CD8-positive, alpha-beta T cell (primary cell): ENCODE measurements at regions of chr19 and their contacts with region 1.

Region 1: DNA sequence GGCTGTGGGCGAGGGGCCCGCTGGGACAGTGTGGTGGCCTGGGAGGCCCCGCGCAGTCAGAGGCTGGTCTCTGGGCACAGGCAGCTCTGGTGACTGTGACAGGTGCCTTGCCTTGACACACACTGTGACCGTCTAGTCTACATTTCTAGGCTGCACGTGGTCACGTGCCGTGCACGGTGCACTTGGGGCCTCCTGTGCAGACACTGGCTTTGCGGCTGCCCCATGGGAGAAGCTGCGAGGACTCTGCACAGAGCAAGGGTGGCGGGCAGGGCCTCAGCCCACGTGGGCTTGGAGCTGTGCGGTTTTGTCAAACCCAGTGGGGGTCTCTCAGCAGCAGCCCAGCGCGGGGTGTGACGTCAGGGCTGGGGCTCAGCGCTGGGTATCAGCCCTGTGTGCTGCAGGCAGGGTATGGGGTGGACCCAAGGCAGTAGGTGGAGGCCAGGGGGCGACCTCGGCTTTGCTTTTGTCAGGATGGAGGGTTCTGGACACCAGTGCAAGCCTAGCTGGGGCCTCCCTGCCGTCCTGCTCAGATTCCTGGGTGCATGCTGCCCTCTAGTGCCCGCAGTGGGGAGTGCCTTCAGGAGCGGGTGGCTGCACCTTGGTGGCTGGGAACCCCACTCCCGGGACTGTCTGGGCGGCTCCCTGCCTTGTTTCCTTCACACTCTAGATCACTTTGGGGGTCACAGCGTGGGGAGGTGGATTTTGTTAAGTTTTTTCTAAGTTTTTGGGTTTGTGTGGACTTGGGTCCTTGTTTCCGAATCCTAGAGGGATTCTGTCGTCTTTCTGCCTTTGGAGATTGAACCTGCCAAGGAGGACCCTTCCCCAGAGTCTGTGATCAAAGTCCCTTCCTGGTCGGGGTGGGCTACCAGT is 62.6 kb downstream of the KDM4B start:
- DNase-seq: peak; percentile 70 to 92 (median 81)
- ATAC-seq: peak; percentile 87
- H3K4me3 ChIP-seq: no peak overlapping the region
- H3K4me3 Mint-ChIP-seq: no peak overlapping the region
- H3K27ac ChIP-seq: no peak overlapping the region
- H3K27ac Mint-ChIP-seq: no peak overlapping the region
- H3K4me1 ChIP-seq: peaks cover 7% of the 10 kb centered on the region
- H3K4me1 Mint-ChIP-seq: peaks cover 8% of the 10 kb centered on the region
- H3K27me3 ChIP-seq: no peaks in the 10 kb centered on the region
- H3K27me3 Mint-ChIP-seq: no peaks in the 10 kb centered on the region
- CTCF ChIP-seq: peak; percentile 88

Region 2: DNA sequence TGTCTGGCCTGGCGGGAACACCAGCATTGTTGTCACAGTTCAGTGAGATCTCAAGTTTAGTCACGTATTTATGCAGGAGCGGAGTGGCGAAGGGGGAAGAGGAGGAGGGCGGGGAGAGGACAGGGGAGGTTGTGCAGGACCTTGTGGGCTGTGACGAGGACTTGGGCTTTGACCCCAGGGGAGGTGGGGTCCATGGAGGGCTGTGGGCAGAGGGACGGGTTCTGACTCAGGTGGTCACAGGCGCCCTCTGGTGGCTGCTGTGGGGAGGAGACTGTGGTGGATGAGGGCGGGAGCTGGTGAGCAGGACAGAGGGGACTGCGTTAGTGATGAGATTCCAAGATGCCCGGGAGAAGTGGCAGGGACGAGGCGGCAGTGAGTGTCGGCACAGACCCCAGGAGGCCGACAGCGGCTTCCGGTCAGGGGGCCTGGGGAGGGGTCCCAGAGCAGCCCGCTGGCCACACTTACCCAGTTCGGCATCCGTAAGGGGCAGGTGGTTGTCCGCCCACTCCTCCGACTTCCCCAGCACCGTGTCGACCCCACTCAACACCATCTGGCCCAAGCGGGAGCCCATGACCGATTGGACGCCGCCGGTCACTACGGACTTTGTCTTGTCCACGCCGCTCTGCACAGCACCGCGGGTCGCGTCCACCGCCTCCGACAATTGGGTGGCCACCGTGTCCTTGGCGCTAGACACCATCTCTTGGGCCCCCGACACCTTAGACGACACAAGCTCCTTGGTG is 179.7 kb before region 1 on chr19:
- CTCF ChIA-PET with region 1: interaction called, 25 read pairs
- POLR2A ChIA-PET with region 1: no interaction called
- intact Hi-C with region 1: loop called in 1 of 2 experiments (anchors 5 kb)
- DNase-seq: peak; percentile 58 to 88 (median 75)
- ATAC-seq: peak; percentile 91
- H3K4me3 ChIP-seq: no peak overlapping the region
- H3K4me3 Mint-ChIP-seq: no peak overlapping the region
- H3K27ac ChIP-seq: no peak overlapping the region
- H3K27ac Mint-ChIP-seq: no peak overlapping the region
- H3K4me1 ChIP-seq: no peaks in the 10 kb centered on the region
- H3K4me1 Mint-ChIP-seq: no peaks in the 10 kb centered on the region
- H3K27me3 ChIP-seq: no peaks in the 10 kb centered on the region
- H3K27me3 Mint-ChIP-seq: no peaks in the 10 kb centered on the region
- CTCF ChIP-seq: peak; percentile 73

Region 3: GRCh38 chr19:4909897-4910593 is 121.4 kb before region 1 on chr19:
- CTCF ChIA-PET with region 1: interaction called, 14 read pairs
- POLR2A ChIA-PET with region 1: no interaction called
- intact Hi-C with region 1: loop called in 1 of 2 experiments (anchors 1 kb)
- DNase-seq: peak; percentile 85 to 96 (median 93)
- ATAC-seq: peak; percentile 82
- H3K4me3 ChIP-seq: peak overlapping the region; percentile 44 to 62
- H3K4me3 Mint-ChIP-seq: peak overlapping the region; percentile 99
- H3K27ac ChIP-seq: no peak overlapping the region
- H3K27ac Mint-ChIP-seq: no peak overlapping the region
- H3K4me1 ChIP-seq: peaks cover 57% of the 10 kb centered on the region
- H3K4me1 Mint-ChIP-seq: peaks cover 66% of the 10 kb centered on the region
- H3K27me3 ChIP-seq: no peaks in the 10 kb centered on the region
- H3K27me3 Mint-ChIP-seq: no peaks in the 10 kb centered on the region
- CTCF ChIP-seq: no peak

Region 4: DNA sequence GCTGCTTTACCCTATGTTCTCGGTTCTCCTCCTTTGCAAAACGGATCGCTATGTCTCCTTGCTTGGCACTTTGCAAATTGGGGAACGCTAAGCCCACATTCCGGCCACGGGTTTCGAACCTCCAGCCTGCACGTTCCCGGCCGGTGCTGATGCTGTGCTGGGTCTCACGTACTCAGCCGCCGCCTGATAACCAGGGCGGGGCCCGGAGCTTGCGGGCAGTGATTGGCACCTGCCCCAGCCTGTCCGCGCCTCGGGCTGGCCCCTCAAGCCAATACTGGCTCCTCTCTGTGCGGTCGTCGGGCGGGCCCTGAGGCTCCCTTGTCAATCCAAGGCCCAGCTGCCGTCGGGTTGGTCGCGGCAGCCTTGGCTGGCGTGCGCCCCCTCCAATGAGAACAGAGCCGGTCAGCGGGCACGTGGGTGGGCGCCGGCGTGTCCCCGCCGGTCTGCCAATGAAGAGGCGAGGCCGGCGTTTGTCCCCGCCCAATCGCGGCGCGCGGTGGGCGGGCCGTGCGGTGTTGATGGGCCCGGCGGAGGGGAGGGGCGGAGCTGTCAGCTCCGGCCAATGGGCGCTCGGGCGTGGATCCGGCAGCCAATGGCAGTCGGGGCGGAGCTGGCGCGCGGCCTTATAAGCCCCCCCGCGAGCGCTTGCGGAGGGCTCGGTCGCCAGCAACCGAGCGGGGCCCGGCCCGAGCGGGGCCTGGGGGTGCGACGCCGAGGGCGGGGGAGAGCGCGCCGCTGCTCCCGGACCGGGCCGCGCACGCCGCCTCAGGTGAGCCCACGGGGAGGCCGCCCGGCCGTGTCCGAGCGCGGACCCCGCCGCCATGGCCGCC is 62.8 kb before region 1 on chr19 and contains the start of gene KDM4B:
- CTCF ChIA-PET with region 1: interaction called, 11 read pairs
- POLR2A ChIA-PET with region 1: no interaction called
- intact Hi-C with region 1: no loop called
- DNase-seq: peak; percentile 96 to 100 (median 99)
- ATAC-seq: peak; percentile 87
- H3K4me3 ChIP-seq: peak within 1 kb of the TSS; percentile 54 to 57
- H3K4me3 Mint-ChIP-seq: peak within 1 kb of the TSS; percentile 87
- H3K27ac ChIP-seq: peak within 1 kb of the TSS; percentile 33 to 60
- H3K27ac Mint-ChIP-seq: peak within 1 kb of the TSS; percentile 81
- H3K4me1 ChIP-seq: peaks cover 30% of the 10 kb centered on the region
- H3K4me1 Mint-ChIP-seq: peaks cover 30% of the 10 kb centered on the region
- H3K27me3 ChIP-seq: no peaks in the 10 kb centered on the region
- H3K27me3 Mint-ChIP-seq: no peaks in the 10 kb centered on the region
- CTCF ChIP-seq: no peak
- total RNA-seq, gene KDM4B: 111 to 121 TPM

Region 5: GRCh38 chr19:5271141-5271540 is 239.7 kb after region 1 on chr19:
- CTCF ChIA-PET with region 1: no interaction called
- POLR2A ChIA-PET with region 1: no interaction called
- intact Hi-C with region 1: no loop called
- DNase-seq: no peak
- ATAC-seq: no peak
- H3K4me3 ChIP-seq: no peak overlapping the region
- H3K4me3 Mint-ChIP-seq: no peak overlapping the region
- H3K27ac ChIP-seq: no peak overlapping the region
- H3K27ac Mint-ChIP-seq: no peak overlapping the region
- H3K4me1 ChIP-seq: no peaks in the 10 kb centered on the region
- H3K4me1 Mint-ChIP-seq: no peaks in the 10 kb centered on the region
- H3K27me3 ChIP-seq: no peaks in the 10 kb centered on the region
- H3K27me3 Mint-ChIP-seq: no peaks in the 10 kb centered on the region
- CTCF ChIP-seq: no peak